ENCODE measurements at regions of chr10 and their contacts with region 1.

Region 1: DNA sequence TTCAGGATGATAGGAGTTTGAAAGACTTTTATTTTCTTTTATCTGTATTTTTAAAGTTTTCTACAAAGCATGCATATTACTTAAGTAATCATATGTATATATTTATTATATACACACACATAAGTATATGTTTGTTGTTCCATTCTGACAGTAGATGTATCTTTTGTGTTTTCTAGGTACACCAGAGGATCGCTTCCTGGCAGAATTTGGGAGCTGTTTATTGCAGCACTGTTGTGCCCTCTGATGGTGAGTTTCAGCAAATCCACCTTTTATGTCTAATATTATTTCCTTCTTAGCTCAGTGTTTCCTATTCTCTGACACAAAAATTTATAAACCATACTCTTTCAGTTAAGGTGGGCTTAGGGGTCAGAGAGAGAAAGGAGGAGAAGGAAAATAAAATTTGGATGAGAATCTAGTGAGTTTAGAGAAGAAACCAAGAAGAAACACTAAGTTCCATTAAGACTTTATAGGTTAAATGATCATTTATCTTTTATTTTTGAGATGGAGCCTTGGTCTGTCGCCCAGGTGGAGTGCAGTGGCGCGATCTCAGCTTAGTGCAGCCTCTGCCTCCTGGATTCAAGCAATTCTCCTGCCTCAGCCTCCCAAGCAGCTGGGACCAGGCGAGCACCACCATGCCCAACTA is 59.2 kb upstream of the OIT3 start:
- DNase-seq: peak; percentile 76
- ATAC-seq: peak; percentile 87
- H3K4me3 ChIP-seq: no peak overlapping the region
- H3K27ac ChIP-seq: no peak overlapping the region
- H3K4me1 ChIP-seq: no peaks in the 10 kb centered on the region
- H3K27me3 ChIP-seq: no peaks in the 10 kb centered on the region
- CTCF ChIP-seq: peak; percentile 81
- POLR2A ChIP-seq: no peak
- RAD21 ChIP-seq: peak; percentile 92

Region 2: GRCh38 chr10:72375585-72375984 is 458.7 kb before region 1 on chr10:
- CTCF ChIA-PET with region 1: interaction called, 4 read pairs
- POLR2A ChIA-PET with region 1: no interaction called
- dilution Hi-C with region 1: no loop called
- in situ Hi-C with region 1: no loop called
- intact Hi-C with region 1: loop called (anchors 5 kb)
- DNase-seq: no peak
- ATAC-seq: peak; percentile 72
- H3K4me3 ChIP-seq: no peak overlapping the region
- H3K27ac ChIP-seq: no peak overlapping the region
- H3K4me1 ChIP-seq: no peaks in the 10 kb centered on the region
- H3K27me3 ChIP-seq: no peaks in the 10 kb centered on the region
- CTCF ChIP-seq: peak; percentile 15; the same call in 1 of the 2 replicates
- POLR2A ChIP-seq: no peak
- RAD21 ChIP-seq: peak; percentile 36

Region 3: GRCh38 chr10:72625608-72626443 is 208.5 kb before region 1 on chr10 and contains the start of gene MICU1:
- CTCF ChIA-PET with region 1: no interaction called
- POLR2A ChIA-PET with region 1: no interaction called
- dilution Hi-C with region 1: no loop called
- in situ Hi-C with region 1: no loop called
- intact Hi-C with region 1: loop called (anchors 1 kb)
- DNase-seq: peak; percentile 90
- ATAC-seq: peak; percentile 99
- H3K4me3 ChIP-seq: peak within 1 kb of the TSS; percentile 73
- H3K27ac ChIP-seq: peak within 1 kb of the TSS; percentile 80
- H3K4me1 ChIP-seq: peaks cover 5% of the 10 kb centered on the region
- H3K27me3 ChIP-seq: no peaks in the 10 kb centered on the region
- CTCF ChIP-seq: no peak
- POLR2A ChIP-seq: peak; percentile 82
- RAD21 ChIP-seq: no peak
- total RNA-seq, gene MICU1: 43.6 and 45.0 TPM in 2 replicates

Region 4: GRCh38 chr10:72692057-72692910 is 142.0 kb before region 1 on chr10 and contains the start of gene MCU:
- CTCF ChIA-PET with region 1: interaction called, 5 read pairs
- POLR2A ChIA-PET with region 1: interaction called, 4 read pairs
- dilution Hi-C with region 1: no loop called
- in situ Hi-C with region 1: loop called (anchors 5 kb)
- intact Hi-C with region 1: loop called (anchors 1 kb)
- DNase-seq: peak; percentile 37
- ATAC-seq: peak; percentile 96
- H3K4me3 ChIP-seq: peak within 1 kb of the TSS; percentile 95
- H3K27ac ChIP-seq: peak within 1 kb of the TSS; percentile 83
- H3K4me1 ChIP-seq: peaks cover 8% of the 10 kb centered on the region; the same call in 1 of the 2 replicates
- H3K27me3 ChIP-seq: no peaks in the 10 kb centered on the region
- CTCF ChIP-seq: no peak
- POLR2A ChIP-seq: peak; percentile 60; the same call in 1 of the 2 replicates
- RAD21 ChIP-seq: no peak; the same call in 1 of the 2 replicates
- total RNA-seq, gene MCU: 36.2 and 39.7 TPM in 2 replicates

Region 5: DNA sequence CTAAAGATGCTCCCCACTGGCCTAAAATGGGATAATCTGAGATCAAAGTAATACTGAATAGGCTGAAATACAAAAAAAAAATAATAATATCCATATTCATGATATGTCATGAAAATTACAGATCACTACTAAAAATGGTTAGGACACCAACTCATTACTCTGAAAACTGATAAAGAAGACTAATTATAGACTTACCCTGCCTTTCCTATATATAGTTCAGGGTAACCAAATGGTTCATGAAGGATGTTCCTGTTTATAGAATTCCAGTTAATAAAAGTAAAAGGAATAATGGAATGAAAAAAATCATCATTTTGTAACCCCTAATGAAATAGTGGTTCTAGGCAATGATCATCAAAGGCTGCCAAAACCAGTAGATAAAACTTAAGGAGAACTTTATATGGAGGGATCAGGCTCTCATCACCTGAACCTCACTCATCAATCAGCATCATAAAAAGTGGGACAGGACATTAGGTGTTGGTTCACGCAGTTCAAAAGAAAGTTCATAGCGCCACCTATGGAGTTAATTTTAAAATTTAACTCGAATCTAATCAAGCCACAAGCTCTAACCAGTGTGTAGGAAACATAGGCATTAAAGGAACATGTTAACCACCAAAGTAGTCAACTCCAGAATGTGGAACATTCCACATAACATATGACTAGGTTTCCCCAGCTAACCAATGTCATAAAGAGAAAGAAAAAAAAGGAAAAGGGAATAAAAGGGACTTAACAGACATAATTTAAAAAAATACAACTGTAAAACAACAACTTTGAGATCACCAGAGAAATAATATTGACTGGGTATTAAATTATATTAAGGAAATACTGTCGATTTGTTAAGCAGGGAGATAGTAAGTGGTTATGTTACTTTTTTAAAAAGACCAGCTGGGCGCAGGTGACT is 226.7 kb after region 1 on chr10:
- CTCF ChIA-PET with region 1: no interaction called
- POLR2A ChIA-PET with region 1: no interaction called
- dilution Hi-C with region 1: no loop called
- in situ Hi-C with region 1: no loop called
- intact Hi-C with region 1: loop called (anchors 5 kb)
- DNase-seq: peak; percentile 8
- ATAC-seq: peak; percentile 67
- H3K4me3 ChIP-seq: no peak overlapping the region
- H3K27ac ChIP-seq: no peak overlapping the region
- H3K4me1 ChIP-seq: no peaks in the 10 kb centered on the region
- H3K27me3 ChIP-seq: no peaks in the 10 kb centered on the region
- CTCF ChIP-seq: peak; percentile 36
- POLR2A ChIP-seq: no peak
- RAD21 ChIP-seq: peak; percentile 41; the same call in 1 of the 2 replicates

Region 6: DNA sequence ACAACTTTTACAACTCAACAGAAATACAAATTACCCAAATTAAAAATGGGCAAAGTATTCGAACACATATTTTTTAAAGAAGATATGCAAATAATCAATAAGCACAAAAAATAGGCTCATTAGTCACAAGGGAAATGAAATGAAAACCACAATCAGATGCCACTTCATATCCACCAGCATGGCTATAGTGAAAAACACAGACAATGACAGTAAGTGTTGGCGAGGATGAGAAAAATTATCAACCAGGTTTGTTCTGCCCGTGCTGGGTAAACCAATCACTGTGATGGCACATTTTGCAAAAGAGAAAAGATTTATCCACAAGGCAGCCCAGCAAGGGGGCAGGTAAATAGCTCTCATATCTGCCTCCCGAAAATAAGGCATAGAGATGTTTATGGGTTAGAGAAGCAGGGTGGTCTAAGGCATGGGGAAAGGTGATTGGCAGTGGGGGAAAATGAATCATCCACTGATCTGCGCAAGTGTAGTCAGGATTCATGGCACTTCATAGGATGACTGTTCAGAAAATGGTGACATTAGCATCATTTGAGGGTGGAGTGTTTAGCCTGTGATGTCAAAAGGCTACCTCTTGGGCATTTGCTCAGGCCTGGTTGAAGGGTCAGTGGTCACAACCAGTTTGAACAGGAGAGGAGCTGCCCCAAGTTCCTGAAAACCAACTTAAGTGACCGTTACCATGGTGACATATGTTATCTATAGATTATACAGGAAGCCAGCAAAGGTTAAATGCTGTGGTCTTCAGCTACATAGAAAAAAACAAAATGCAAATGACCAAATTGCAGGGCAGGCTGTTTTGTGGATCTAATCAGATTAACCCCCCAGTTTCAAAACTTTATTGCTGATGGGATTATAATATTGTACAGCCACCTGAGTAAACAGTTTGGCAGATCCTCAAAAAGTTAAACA is 532.3 kb after region 1 on chr10:
- CTCF ChIA-PET with region 1: no interaction called
- POLR2A ChIA-PET with region 1: interaction called, 10 read pairs
- dilution Hi-C with region 1: no loop called
- in situ Hi-C with region 1: no loop called
- intact Hi-C with region 1: no loop called
- DNase-seq: no peak
- ATAC-seq: no peak
- H3K4me3 ChIP-seq: no peak overlapping the region
- H3K27ac ChIP-seq: no peak overlapping the region
- H3K4me1 ChIP-seq: no peaks in the 10 kb centered on the region
- H3K27me3 ChIP-seq: no peaks in the 10 kb centered on the region
- CTCF ChIP-seq: no peak
- POLR2A ChIP-seq: no peak
- RAD21 ChIP-seq: no peak

Measured in IMR-90 (cell line).